ENCODE measurements at regions of chr5 and their contacts with region 1.

Region 1: DNA sequence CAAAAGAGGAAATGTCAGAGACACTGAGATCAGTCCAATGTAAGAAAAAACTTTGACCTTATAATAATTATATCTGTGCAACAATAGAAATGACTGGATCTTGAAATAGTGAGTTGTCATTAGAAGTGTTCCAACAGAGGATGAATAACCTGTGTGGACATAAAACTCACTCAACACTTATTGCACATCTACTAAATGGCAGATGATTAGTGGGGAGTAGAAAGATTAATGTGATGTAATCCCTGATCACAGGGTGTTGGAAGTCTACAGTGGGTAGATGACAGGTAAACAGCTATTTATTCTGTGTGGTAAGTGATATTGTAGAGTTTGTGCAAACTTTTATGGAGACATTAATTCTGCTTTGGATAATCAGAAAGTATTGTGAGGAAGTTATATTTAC is 177.3 kb upstream of the HMHB1 start:
- DNase-seq: no peak
- H3K4me3 ChIP-seq: no peak overlapping the region
- H3K27ac ChIP-seq: no peak overlapping the region
- H3K4me1 ChIP-seq: peaks cover 0 to 7% (median 2%) of the 10 kb centered on the region in 4 donors
- H3K27me3 ChIP-seq: no peaks in the 10 kb centered on the region
- CTCF ChIP-seq: no peak
- EP300 ChIP-seq: no peak
- POLR2A ChIP-seq: no peak

Region 2: DNA sequence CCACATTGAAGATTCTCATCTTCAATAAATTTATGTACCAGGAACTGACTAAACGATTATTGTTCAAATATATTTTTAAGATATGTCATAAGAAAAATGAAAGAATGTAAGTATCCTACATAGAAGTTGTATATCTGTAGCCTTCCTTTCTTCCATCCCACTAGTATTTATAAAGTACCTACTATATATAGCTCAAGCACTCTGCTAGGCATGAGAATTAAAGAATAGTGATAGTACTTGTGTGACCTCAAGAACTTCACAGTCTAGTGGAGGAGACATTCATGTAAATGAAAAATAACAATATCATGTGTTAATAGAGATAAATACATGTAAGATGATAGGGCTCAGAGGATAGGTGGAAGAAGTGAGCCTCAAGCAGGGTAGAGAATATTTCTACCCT is 23.7 kb before region 1 on chr5:
- in situ Hi-C with region 1: no loop called
- intact Hi-C with region 1: loop called (anchors 1 kb)
- DNase-seq: no peak
- H3K4me3 ChIP-seq: no peak overlapping the region
- H3K27ac ChIP-seq: no peak overlapping the region
- H3K4me1 ChIP-seq: no peaks in the 10 kb centered on the region
- H3K27me3 ChIP-seq: no peaks in the 10 kb centered on the region
- CTCF ChIP-seq: no peak
- EP300 ChIP-seq: no peak
- POLR2A ChIP-seq: no peak